ENCODE measurements at regions of chr5 and their contacts with region 1.

Region 1: DNA sequence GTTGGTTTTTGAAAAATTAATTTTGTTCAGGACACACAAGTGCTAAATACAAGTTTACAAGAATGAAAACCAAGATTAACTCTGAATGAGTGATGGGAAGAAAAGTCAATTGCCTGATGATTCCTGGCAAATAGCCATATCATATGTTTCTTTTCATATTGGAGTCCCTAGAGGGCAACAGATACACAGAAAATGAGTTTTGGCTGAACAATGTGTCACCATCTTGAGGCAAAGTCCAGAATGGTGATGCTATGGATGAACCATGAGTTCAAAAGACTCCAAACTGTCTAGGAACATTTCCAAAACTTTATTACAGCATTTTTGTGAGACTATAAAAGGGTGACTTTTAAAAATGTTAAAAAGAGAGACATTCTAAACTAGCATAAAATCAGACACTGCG is 382.9 kb downstream of the TMEM161B start:
- DNase-seq: no peak
- H3K4me3 ChIP-seq: no peak overlapping the region
- H3K27ac ChIP-seq: peak overlapping the region in 1 of 59 donors; percentile 11
- H3K27me3 ChIP-seq: no peaks in the 10 kb centered on the region
- CTCF ChIP-seq: peak in 37 of 56 donors; percentile 5 to 54 (median 31)

Region 2: DNA sequence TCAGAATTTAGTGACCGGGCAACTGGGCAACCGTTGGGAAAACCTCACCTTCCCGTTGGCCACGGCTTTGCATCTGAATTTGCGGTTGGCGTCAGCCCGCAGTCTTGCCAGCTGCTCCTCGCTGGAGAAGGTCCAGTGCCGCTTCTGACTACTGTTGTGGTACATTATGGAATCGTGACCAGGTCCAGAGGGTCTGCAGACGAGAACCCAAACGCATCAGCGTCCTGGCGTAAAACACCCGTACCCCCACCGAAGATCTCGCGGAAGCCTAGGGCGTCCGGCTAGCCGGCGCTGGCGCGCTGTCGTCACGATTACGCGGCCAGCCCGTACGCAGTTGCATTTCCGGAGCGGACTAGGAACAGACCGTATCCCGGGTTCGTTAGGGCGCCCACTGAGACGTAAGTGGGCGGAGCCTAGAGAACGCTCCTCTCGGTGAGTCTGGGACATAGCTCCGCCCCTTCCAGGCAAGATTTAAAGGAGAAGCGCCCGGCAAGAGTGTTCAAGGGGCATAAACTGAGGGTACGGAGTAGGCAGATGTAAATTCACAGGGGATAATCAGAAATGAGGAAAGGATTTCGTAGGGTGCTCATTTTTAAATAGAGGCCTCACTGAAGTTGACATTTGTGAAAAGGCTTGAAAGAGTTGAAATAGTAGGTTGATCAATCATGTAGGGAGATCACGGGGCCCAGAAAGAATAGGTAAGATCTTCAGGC is 473.0 kb before region 1 on chr5 and contains the start of gene CCNH:
- intact Hi-C with region 1: no loop called
- DNase-seq: peak; percentile 95 to 100 (median 99)
- H3K4me3 ChIP-seq: peak within 1 kb of the TSS; percentile 62 to 99 (median 89)
- H3K27ac ChIP-seq: peak within 1 kb of the TSS; percentile 73 to 100 (median 97)
- H3K27me3 ChIP-seq: no peaks in the 10 kb centered on the region
- CTCF ChIP-seq: peak in 22 of 56 donors; percentile 6 to 54 (median 28)
- total RNA-seq, gene CCNH: 69.5 to 140 (median 104) TPM

Region 3: DNA sequence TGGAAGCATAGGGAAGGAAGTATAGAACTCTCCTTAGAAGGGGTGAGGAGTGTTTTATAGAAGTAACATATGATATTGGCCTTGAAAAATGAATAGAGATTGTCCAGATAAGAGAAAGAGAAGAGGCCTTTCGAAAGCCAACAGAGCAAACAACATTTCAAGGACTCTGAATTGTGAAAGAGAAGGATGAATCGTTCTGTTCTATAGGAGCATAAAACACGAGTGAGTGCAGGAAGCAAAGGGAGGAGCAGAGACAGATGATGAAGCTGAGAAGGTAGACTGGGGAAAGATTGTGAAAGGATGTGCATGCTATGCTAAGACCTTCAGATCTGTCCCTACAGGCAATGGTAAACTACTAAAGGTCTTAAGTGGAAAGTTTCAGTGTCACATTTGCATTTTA is 111.9 kb after region 1 on chr5:
- intact Hi-C with region 1: no loop called
- DNase-seq: no peak
- H3K4me3 ChIP-seq: no peak overlapping the region
- H3K27ac ChIP-seq: no peak overlapping the region
- H3K27me3 ChIP-seq: no peaks in the 10 kb centered on the region
- CTCF ChIP-seq: no peak

Region 4: DNA sequence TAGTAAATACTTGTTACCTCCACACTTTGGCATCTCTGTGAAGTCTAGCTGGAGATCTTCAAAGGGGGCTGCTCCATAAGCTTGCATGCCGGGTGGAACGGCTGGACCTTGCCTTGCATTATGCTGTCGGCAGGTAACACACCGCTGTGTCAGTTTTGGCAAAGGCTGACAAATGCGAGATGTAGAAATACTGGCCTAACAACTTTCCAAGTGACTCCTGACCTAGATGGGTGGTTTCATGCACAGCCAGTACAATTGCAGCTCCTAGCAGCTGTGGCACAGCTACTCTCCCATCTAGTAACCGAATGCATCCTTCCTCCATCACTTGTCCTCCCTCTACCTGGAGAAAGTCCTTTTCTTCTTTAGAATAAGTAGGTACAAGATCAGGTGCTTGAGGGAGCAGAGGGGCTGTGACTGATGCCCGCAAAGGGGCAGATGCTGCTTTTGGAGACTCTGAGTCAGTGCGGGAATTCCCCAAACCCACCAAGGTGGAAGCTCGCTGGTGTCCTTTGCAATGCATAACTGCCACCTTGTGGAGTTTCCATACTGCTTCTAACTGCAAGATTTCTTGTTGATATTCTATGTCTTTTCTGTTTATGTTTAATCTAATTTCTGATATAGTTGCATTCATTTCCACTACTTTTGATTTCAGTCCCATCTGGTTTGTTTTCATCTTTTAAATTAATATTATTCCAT is 304.5 kb after region 1 on chr5:
- intact Hi-C with region 1: loop called in 1 of 2 experiments (anchors 5 kb)
- DNase-seq: peak in 5 of 10 donors; percentile 14 to 43 (median 32)
- H3K4me3 ChIP-seq: peak overlapping the region in 55 of 59 donors; percentile 5 to 58 (median 38)
- H3K27ac ChIP-seq: peak overlapping the region in 26 of 59 donors; percentile 5 to 77 (median 37)
- H3K27me3 ChIP-seq: no peaks in the 10 kb centered on the region
- CTCF ChIP-seq: peak in 55 of 56 donors; percentile 43 to 85 (median 66)

Region 5: GRCh38 chr5:88761269-88761850 is 875.6 kb after region 1 on chr5:
- intact Hi-C with region 1: no loop called
- DNase-seq: no peak
- H3K4me3 ChIP-seq: peak overlapping the region in 27 of 59 donors; percentile 3 to 38 (median 19)
- H3K27ac ChIP-seq: peak overlapping the region in 54 of 59 donors; percentile 1 to 79 (median 56)
- H3K27me3 ChIP-seq: no peaks in the 10 kb centered on the region
- CTCF ChIP-seq: no peak

Region 6: GRCh38 chr5:89097103-89097502 is 1211.3 kb after region 1 on chr5:
- intact Hi-C with region 1: no loop called
- DNase-seq: no peak
- H3K4me3 ChIP-seq: no peak overlapping the region
- H3K27ac ChIP-seq: no peak overlapping the region
- H3K27me3 ChIP-seq: no peaks in the 10 kb centered on the region
- CTCF ChIP-seq: no peak

Measured in dorsolateral prefrontal cortex (tissue), 120 donors.